HepG2 (cell line): ENCODE measurements at regions of chr5 and their contacts with region 1.

Region 1: DNA sequence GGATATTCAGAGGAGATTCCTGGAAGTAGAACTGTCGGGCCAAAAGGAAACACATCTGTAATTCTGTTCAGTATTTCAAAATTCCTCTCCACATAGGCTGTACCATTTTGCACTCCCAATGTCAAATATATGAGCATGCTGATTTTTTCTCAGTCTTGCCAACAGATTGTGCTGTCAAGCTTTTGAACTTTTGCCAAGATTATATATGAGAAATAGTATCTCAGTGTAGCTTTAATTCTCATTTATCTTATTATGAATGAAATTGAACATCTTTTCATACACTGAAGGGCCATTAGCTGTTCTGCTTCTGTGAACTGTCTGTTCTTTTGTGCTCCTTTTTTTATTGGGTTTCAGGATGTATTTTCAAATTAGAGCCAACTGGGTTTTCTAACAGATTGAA is 907.1 kb downstream of the MAT2B start:
- DNase-seq: no peak
- ATAC-seq: no peak
- H3K4me3 ChIP-seq: no peak overlapping the region
- H3K27ac ChIP-seq: no peak overlapping the region
- H3K4me1 ChIP-seq: no peaks in the 10 kb centered on the region
- H3K27me3 ChIP-seq: no peaks in the 10 kb centered on the region; a peak in 1 of 5 replicates
- CTCF ChIP-seq: no peak
- EP300 ChIP-seq: no peak
- POLR2A ChIP-seq: no peak
- RAD21 ChIP-seq: no peak

Region 2: DNA sequence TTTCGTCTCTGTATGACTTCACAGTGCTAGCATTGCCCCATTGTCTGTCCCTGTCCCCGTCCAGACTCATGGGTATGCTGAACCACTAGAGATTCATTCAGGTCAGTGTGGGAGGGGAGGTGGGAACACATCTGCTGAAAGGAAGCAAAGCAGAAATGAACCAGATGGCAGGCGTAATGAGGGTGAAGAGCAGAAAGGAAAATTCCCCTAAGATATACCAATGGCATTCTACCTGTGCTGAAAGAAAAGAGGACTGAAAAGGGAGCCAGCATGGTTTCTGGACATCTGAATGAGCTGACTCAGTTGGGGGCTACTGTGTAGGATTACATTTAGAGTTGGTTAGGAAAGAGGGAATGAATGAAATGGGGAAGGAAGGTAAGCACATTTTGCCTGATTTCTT is 228.4 kb before region 1 on chr5:
- CTCF ChIA-PET with region 1: no interaction called
- POLR2A ChIA-PET with region 1: no interaction called
- in situ Hi-C with region 1: no loop called
- intact Hi-C with region 1: no loop called
- DNase-seq: no peak
- ATAC-seq: no peak
- H3K4me3 ChIP-seq: no peak overlapping the region
- H3K27ac ChIP-seq: no peak overlapping the region
- H3K4me1 ChIP-seq: no peaks in the 10 kb centered on the region
- H3K27me3 ChIP-seq: no peaks in the 10 kb centered on the region
- CTCF ChIP-seq: no peak
- EP300 ChIP-seq: no peak
- POLR2A ChIP-seq: no peak
- RAD21 ChIP-seq: no peak

Region 3: GRCh38 chr5:164237486-164237885 is 175.0 kb before region 1 on chr5:
- CTCF ChIA-PET with region 1: no interaction called
- POLR2A ChIA-PET with region 1: no interaction called
- in situ Hi-C with region 1: no loop called
- intact Hi-C with region 1: no loop called
- DNase-seq: no peak
- ATAC-seq: no peak
- H3K4me3 ChIP-seq: no peak overlapping the region
- H3K27ac ChIP-seq: no peak overlapping the region
- H3K4me1 ChIP-seq: no peaks in the 10 kb centered on the region
- H3K27me3 ChIP-seq: no peaks in the 10 kb centered on the region
- CTCF ChIP-seq: no peak
- EP300 ChIP-seq: no peak
- POLR2A ChIP-seq: no peak
- RAD21 ChIP-seq: no peak

Region 4: GRCh38 chr5:164383662-164384061 is 28.9 kb before region 1 on chr5:
- CTCF ChIA-PET with region 1: no interaction called
- POLR2A ChIA-PET with region 1: no interaction called
- in situ Hi-C with region 1: no loop called
- intact Hi-C with region 1: loop called (anchors 1 kb)
- DNase-seq: no peak
- ATAC-seq: no peak
- H3K4me3 ChIP-seq: no peak overlapping the region
- H3K27ac ChIP-seq: no peak overlapping the region
- H3K4me1 ChIP-seq: no peaks in the 10 kb centered on the region
- H3K27me3 ChIP-seq: no peaks in the 10 kb centered on the region
- CTCF ChIP-seq: no peak
- EP300 ChIP-seq: no peak
- POLR2A ChIP-seq: no peak
- RAD21 ChIP-seq: no peak

Region 5: GRCh38 chr5:164498438-164498837 is 85.9 kb after region 1 on chr5:
- CTCF ChIA-PET with region 1: no interaction called
- POLR2A ChIA-PET with region 1: no interaction called
- in situ Hi-C with region 1: no loop called
- intact Hi-C with region 1: no loop called
- DNase-seq: no peak
- ATAC-seq: no peak
- H3K4me3 ChIP-seq: no peak overlapping the region
- H3K27ac ChIP-seq: no peak overlapping the region
- H3K4me1 ChIP-seq: no peaks in the 10 kb centered on the region
- H3K27me3 ChIP-seq: no peaks in the 10 kb centered on the region
- CTCF ChIP-seq: no peak
- EP300 ChIP-seq: no peak
- POLR2A ChIP-seq: no peak
- RAD21 ChIP-seq: no peak